ENCODE measurements at regions of chr7 and their contacts with region 1.

Region 1: GRCh38 chr7:134690016-134690415 is 43.4 kb downstream of the BPGM start:
- DNase-seq: no peak
- ATAC-seq: peak; percentile 81
- H3K4me3 ChIP-seq: peak overlapping the region; percentile 31 to 59
- H3K27ac ChIP-seq: peak overlapping the region in 1 of 2 donors; percentile 87
- H3K4me1 ChIP-seq: peaks cover 4 to 15% of the 10 kb centered on the region in 2 donors
- H3K27me3 ChIP-seq: no peaks in the 10 kb centered on the region

Region 2: DNA sequence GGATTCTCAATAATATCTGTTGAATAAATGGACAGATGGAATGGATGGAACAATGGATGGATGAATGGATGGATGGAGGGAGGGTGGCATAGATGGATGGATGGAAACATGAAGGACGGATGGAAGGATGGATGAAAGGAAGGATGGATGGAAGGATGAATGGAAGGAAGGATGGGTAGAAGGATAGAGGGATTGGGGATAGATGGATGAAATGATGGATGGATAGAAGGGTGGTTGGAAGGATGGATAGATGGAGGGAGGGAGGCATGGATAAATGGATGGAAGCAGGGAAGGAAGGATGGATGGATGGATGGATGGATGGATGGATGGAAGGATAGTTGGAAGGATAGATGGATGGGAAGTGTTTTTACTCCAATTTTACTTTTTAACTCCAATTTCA is 105.7 kb before region 1 on chr7:
- intact Hi-C with region 1: no loop called
- DNase-seq: no peak
- ATAC-seq: no peak
- H3K4me3 ChIP-seq: no peak overlapping the region
- H3K27ac ChIP-seq: no peak overlapping the region
- H3K4me1 ChIP-seq: no peaks in the 10 kb centered on the region
- H3K27me3 ChIP-seq: peaks cover 0 to 2% of the 10 kb centered on the region in 2 donors

Region 3: GRCh38 chr7:134724606-134725005 is 34.6 kb after region 1 on chr7:
- intact Hi-C with region 1: loop called in 1 of 2 experiments (anchors 5 kb)
- DNase-seq: no peak
- ATAC-seq: peak; percentile 37
- H3K4me3 ChIP-seq: no peak overlapping the region
- H3K27ac ChIP-seq: peak overlapping the region; percentile 19 to 28
- H3K4me1 ChIP-seq: peaks cover 6 to 30% of the 10 kb centered on the region in 2 donors
- H3K27me3 ChIP-seq: no peaks in the 10 kb centered on the region

Region 4: GRCh38 chr7:134750083-134751062 is 60.4 kb after region 1 on chr7:
- intact Hi-C with region 1: loop called (anchors 5 kb)
- DNase-seq: peak in 1 of 2 donors; percentile 63
- ATAC-seq: no peak
- H3K4me3 ChIP-seq: no peak overlapping the region
- H3K27ac ChIP-seq: no peak overlapping the region
- H3K4me1 ChIP-seq: peaks cover 2 to 6% of the 10 kb centered on the region in 2 donors
- H3K27me3 ChIP-seq: no peaks in the 10 kb centered on the region

Region 5: GRCh38 chr7:134827889-134828288 is 137.9 kb after region 1 on chr7:
- intact Hi-C with region 1: loop called in 1 of 2 experiments (anchors 10 kb)
- DNase-seq: no peak
- ATAC-seq: peak; percentile 78
- H3K4me3 ChIP-seq: no peak overlapping the region
- H3K27ac ChIP-seq: peak overlapping the region; percentile 82 to 98
- H3K4me1 ChIP-seq: peaks cover 10% of the 10 kb centered on the region in 2 donors
- H3K27me3 ChIP-seq: no peaks in the 10 kb centered on the region

Region 6: GRCh38 chr7:134954197-134955082 is 264.4 kb after region 1 on chr7:
- intact Hi-C with region 1: loop called (anchors 5 kb)
- DNase-seq: no peak
- ATAC-seq: peak; percentile 69
- H3K4me3 ChIP-seq: no peak overlapping the region
- H3K27ac ChIP-seq: peak overlapping the region in 1 of 2 donors; percentile 75
- H3K4me1 ChIP-seq: no peaks in the 10 kb centered on the region
- H3K27me3 ChIP-seq: no peaks in the 10 kb centered on the region

Region 7: GRCh38 chr7:135274495-135275268 is 584.7 kb after region 1 on chr7:
- intact Hi-C with region 1: loop called in 1 of 2 experiments (anchors 10 kb)
- DNase-seq: peak; percentile 59 to 83
- ATAC-seq: peak; percentile 71
- H3K4me3 ChIP-seq: no peak overlapping the region
- H3K27ac ChIP-seq: no peak overlapping the region
- H3K4me1 ChIP-seq: no peaks in the 10 kb centered on the region
- H3K27me3 ChIP-seq: no peaks in the 10 kb centered on the region